Natural killer cell (primary cell): ENCODE measurements at regions of chr20 and their contacts with region 1.

Region 1: GRCh38 chr20:5056801-5057599 is 55.7 kb upstream of the SLC23A2 start:
- DNase-seq: peak; percentile 67 to 89
- ATAC-seq: peak; percentile 95 to 99 (median 97)
- H3K4me3 ChIP-seq: no peak overlapping the region
- H3K4me3 Mint-ChIP-seq: peak overlapping the region; percentile 18
- H3K27ac ChIP-seq: peak overlapping the region; percentile 26
- H3K27ac Mint-ChIP-seq: peak overlapping the region; percentile 80 to 97
- H3K4me1 ChIP-seq: peaks cover 23% of the 10 kb centered on the region
- H3K4me1 Mint-ChIP-seq: peaks cover 31 to 39% of the 10 kb centered on the region in 2 donors
- H3K27me3 ChIP-seq: no peaks in the 10 kb centered on the region
- H3K27me3 Mint-ChIP-seq: no peaks in the 10 kb centered on the region
- CTCF ChIP-seq: peak; percentile 59

Region 2: DNA sequence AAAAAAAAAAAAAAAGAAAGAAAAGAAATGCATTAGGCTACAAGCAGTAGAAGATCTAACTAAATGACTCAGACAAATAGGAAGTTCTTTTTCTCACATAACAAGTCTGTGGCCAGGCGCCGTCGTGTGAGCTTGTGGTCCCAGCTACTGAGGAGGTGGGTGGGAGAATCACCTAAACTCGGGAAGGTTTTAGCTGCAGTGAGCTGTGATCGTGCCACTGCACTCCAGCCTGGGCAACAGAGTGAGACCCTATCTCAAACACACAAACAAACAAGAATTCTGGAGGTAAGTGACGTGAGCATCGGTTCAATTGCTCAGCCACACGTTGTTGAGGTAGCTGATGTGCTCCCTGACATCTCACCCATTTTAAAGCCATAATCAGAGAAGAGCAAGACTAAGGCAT is 17.7 kb before region 1 on chr20:
- intact Hi-C with region 1: loop called (anchors 1 kb)
- DNase-seq: peak; percentile 66 to 76
- ATAC-seq: peak; percentile 90 to 97 (median 94)
- H3K4me3 ChIP-seq: no peak overlapping the region
- H3K4me3 Mint-ChIP-seq: peak overlapping the region; percentile 87
- H3K27ac ChIP-seq: peak overlapping the region; percentile 54
- H3K27ac Mint-ChIP-seq: peak overlapping the region; percentile 89 to 93
- H3K4me1 ChIP-seq: peaks cover 20% of the 10 kb centered on the region
- H3K4me1 Mint-ChIP-seq: peaks cover 26 to 30% of the 10 kb centered on the region in 2 donors
- H3K27me3 ChIP-seq: no peaks in the 10 kb centered on the region
- H3K27me3 Mint-ChIP-seq: no peaks in the 10 kb centered on the region
- CTCF ChIP-seq: no peak

Region 3: DNA sequence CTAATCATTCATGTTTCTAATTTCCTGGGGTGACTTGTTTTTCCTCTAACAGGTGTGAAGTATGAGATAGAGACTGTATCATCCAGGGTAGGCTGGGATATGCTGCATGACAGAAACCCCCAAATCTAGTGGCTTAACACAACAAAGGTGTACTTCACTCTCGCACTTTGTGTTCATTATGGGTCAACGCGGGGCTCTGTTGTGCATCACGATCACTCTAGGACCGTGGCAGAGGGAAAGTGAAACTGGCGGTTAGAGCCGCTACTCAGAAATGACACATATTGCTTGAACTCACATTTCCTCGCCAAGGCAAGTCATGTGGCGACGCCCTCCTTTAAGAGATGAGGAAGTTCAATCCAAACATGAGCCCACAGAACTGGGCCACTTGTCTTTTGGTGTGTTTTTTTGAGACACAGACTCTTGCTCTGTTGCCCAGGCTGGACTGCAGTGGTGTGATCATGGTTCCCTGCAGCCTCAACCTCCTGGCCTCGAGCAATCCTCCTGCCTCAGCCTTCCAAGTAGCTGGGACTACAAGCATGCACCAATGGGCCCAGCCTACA is 21.5 kb after region 1 on chr20:
- intact Hi-C with region 1: loop called (anchors 1 kb)
- DNase-seq: peak; percentile 72 to 89
- ATAC-seq: peak; percentile 89 to 96 (median 96)
- H3K4me3 ChIP-seq: peak overlapping the region; percentile 22
- H3K4me3 Mint-ChIP-seq: peak overlapping the region; percentile 79
- H3K27ac ChIP-seq: peak overlapping the region; percentile 94
- H3K27ac Mint-ChIP-seq: peak overlapping the region; percentile 97 to 98
- H3K4me1 ChIP-seq: peaks cover 46% of the 10 kb centered on the region
- H3K4me1 Mint-ChIP-seq: peaks cover 36 to 38% of the 10 kb centered on the region in 2 donors
- H3K27me3 ChIP-seq: no peaks in the 10 kb centered on the region
- H3K27me3 Mint-ChIP-seq: no peaks in the 10 kb centered on the region
- CTCF ChIP-seq: no peak

Region 4: GRCh38 chr20:5100684-5101347 is 43.8 kb after region 1 on chr20:
- intact Hi-C with region 1: loop called (anchors 1 kb)
- DNase-seq: peak; percentile 72 to 86
- ATAC-seq: peak; percentile 84 to 98 (median 89)
- H3K4me3 ChIP-seq: no peak overlapping the region
- H3K4me3 Mint-ChIP-seq: no peak overlapping the region
- H3K27ac ChIP-seq: no peak overlapping the region
- H3K27ac Mint-ChIP-seq: peak overlapping the region; percentile 72 to 74
- H3K4me1 ChIP-seq: peaks cover 4% of the 10 kb centered on the region
- H3K4me1 Mint-ChIP-seq: peaks cover 17% of the 10 kb centered on the region in 2 donors
- H3K27me3 ChIP-seq: no peaks in the 10 kb centered on the region
- H3K27me3 Mint-ChIP-seq: no peaks in the 10 kb centered on the region
- CTCF ChIP-seq: peak; percentile 97